ENCODE measurements at regions of chr1 and their contacts with region 1.

Region 1: DNA sequence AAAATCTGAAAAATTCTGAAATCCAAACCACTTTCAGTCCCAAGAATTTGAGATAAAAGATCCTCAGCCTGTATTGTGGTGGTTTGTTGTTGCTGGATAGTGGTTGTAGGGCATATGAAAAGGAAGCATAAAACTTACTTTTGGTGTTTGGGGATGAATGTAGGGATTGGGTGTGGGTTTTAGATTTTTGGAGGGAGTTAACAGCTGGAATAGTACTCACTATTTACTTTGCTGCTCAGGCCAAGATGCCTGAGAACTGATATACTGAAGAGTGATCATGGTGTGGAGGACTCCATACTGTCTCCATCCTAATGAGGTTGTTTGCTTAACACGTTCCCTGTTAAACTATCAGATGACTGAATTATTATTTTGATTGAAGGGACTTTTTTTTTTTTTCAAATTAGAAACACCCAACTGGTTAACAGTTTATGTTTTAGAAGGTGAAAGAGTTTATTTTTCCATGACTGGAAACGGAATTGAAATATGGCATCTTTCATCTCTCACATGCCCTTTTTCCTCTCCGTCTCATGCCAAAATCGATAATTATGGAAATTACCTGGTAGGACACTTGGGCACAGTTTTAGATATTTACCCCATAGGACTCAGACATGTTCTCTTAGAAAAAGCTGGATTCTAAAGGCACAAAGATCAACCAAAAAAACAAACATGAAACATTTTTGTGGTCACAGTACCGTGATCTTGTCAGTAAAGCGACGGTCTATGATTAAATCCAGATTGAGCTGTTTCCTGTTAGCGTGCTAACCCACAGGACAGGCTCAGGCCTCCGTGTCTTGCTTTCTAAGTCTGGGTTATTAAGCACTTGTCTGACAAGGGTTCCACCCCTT is 37.3 kb downstream of the RGL1 start:
- DNase-seq: peak; percentile 58
- H3K4me3 Mint-ChIP-seq: peak overlapping the region; percentile 56
- H3K27ac Mint-ChIP-seq: peak overlapping the region; percentile 88
- H3K4me1 Mint-ChIP-seq: peaks cover 28% of the 10 kb centered on the region
- H3K27me3 Mint-ChIP-seq: no peaks in the 10 kb centered on the region

Region 2: DNA sequence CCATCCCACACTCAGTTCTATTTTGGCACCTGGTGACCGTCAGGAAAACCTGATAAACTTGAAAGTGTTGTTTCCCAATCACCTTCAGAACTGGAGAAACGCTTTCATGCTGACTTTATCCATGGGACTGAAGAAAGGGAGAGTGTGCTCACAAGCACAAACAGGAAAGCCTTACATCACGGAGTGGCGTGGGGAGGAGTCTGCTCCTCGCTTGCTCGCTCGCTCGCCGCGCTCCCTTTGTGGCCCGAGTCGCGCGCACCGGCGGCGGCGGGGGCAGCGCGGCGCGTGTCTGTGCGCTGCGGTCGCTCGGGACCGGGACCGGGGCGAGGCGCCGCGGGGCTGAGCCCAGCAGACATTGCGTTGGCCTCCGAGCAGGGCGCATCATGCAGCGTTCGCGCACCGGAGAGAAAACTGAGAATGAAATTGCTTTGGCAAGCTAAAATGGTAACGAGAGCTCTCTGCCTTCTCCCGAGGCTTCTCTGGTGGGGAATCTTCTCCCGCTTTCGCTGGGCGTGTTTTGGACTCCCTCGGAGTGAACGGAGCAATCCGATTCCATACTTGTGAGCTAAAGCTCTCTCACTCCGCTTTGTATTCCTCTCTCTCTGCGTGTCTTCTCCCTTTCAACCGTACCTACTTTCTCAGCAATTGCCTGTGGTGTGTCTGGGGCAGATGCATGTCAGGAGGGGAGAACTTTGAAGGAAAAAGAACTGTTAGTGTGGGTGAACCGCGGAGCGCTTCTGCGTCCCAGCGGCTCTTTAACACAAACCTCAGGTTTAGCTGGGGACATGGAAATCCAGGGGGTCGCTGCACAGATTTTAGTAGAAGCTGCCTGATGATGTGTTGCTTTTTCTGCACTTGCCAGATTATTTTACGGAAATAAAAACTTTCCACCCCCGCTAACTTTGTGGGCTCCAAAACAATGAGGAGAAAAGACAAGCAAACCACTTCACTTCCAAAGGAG is 37.0 kb before region 1 on chr1 and contains the start of gene RGL1:
- CTCF ChIA-PET with region 1: no interaction called
- intact Hi-C with region 1: loop called (anchors 2 kb)
- DNase-seq: peak; percentile 39
- H3K4me3 Mint-ChIP-seq: peak within 1 kb of the TSS; percentile 83
- H3K27ac Mint-ChIP-seq: no peak within 1 kb of the TSS
- H3K4me1 Mint-ChIP-seq: peaks cover 11% of the 10 kb centered on the region
- H3K27me3 Mint-ChIP-seq: peaks cover 21% of the 10 kb centered on the region
- total RNA-seq, gene RGL1: 2.6 to 2.7 TPM

Region 3: GRCh38 chr1:183859831-183860230 is 17.7 kb after region 1 on chr1:
- CTCF ChIA-PET with region 1: no interaction called
- intact Hi-C with region 1: no loop called
- DNase-seq: no peak
- H3K4me3 Mint-ChIP-seq: no peak overlapping the region
- H3K27ac Mint-ChIP-seq: no peak overlapping the region
- H3K4me1 Mint-ChIP-seq: no peaks in the 10 kb centered on the region
- H3K27me3 Mint-ChIP-seq: no peaks in the 10 kb centered on the region

Region 4: GRCh38 chr1:183880531-183881243 is 38.5 kb after region 1 on chr1:
- CTCF ChIA-PET with region 1: no interaction called
- intact Hi-C with region 1: no loop called
- DNase-seq: no peak
- H3K4me3 Mint-ChIP-seq: no peak overlapping the region
- H3K27ac Mint-ChIP-seq: no peak overlapping the region
- H3K4me1 Mint-ChIP-seq: no peaks in the 10 kb centered on the region
- H3K27me3 Mint-ChIP-seq: no peaks in the 10 kb centered on the region

Region 5: DNA sequence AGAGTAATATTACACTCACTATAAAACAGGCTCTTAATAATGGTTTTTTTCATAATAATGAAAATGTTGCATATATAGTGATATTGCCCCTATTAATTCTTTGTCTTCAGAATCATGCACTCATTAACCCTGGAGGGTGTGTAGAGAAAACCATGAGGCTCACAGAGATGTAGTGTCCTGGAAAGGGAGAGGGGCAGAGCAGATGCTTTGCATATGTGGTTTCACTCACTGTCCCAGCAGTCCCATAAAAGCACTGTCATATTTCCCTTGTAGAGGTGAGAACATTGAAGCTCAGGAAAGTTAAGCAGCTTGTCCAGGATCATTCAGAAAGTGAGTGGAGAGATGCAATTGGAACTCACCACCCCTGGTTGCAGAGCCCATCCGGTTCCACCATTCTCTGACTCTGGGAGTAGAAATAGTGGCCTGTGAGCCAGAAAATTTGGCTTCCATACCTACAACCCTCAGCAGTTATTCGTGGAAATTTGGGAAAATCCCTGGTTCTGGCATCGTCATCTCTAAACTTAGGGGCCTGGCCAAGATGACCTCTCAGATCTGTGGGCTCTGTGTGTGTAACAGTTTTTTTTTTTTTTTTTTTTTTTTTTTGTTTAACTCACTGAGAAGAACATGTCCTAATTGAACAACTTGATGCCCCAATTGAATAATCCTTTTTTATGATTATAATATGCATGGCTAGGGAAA is 49.1 kb after region 1 on chr1:
- CTCF ChIA-PET with region 1: no interaction called
- intact Hi-C with region 1: loop called (anchors 1 kb)
- DNase-seq: no peak
- H3K4me3 Mint-ChIP-seq: no peak overlapping the region
- H3K27ac Mint-ChIP-seq: no peak overlapping the region
- H3K4me1 Mint-ChIP-seq: peaks cover 31% of the 10 kb centered on the region
- H3K27me3 Mint-ChIP-seq: no peaks in the 10 kb centered on the region

Region 6: DNA sequence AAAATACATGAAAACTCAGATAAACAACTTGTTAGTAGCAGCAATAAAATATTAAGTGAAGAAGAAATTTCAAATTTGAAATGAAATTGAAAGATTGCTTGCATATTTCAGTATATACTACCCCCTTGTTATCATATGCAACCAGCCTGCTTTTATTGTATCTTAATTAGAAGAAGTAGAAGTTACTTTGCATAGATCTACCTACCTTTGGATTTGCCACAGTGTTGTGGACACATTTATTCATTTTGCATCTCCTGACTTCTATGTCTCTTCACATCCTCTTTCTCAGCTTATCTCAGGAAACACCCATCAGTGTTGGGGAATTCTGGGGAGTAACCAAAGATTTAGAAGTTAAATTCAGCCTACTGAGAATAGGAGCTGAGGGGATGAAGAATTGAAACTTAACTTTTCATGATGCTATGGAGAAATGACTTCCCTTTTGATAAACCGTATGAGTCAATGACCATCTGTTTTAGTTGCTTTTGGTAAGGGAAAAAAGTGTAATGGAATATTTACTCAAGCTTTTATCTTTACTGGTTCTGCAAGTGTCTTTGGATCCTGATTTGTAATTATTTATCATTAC is 59.7 kb after region 1 on chr1:
- CTCF ChIA-PET with region 1: no interaction called
- intact Hi-C with region 1: loop called (anchors 1 kb)
- DNase-seq: no peak
- H3K4me3 Mint-ChIP-seq: no peak overlapping the region
- H3K27ac Mint-ChIP-seq: peak overlapping the region; percentile 33
- H3K4me1 Mint-ChIP-seq: peaks cover 20% of the 10 kb centered on the region
- H3K27me3 Mint-ChIP-seq: no peaks in the 10 kb centered on the region

Region 7: DNA sequence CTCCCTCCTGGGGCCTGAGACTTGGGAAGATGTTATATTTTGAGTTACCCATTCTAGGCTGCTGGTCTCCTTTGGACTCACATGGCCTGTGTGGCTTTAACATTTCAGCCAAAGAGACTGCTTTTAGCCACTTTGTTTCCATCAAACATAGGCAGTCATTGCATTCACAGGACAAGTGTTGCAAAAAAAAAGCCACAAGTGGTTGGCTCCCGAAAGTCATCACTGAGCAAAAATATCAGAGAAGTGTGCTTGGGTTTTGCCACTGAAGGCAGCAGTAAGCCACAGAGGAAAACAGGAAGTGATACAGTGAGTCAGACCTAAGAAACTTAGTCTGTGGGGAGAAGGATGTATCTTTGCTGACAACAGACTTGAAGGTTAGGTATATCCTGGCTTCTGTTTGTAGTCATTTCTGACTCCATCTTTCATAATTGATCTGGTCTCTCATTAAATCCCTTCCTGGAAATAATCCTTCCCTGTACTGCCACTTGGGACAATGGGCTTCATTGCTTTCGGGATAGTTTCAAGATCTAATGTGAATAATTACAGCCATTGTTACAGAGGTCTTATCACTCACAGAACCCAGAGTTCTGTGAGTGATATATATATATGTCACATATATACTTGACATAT is 114.5 kb after region 1 on chr1:
- CTCF ChIA-PET with region 1: no interaction called
- intact Hi-C with region 1: loop called (anchors 1 kb)
- DNase-seq: peak; percentile 71
- H3K4me3 Mint-ChIP-seq: no peak overlapping the region
- H3K27ac Mint-ChIP-seq: peak overlapping the region; percentile 86
- H3K4me1 Mint-ChIP-seq: no peaks in the 10 kb centered on the region
- H3K27me3 Mint-ChIP-seq: no peaks in the 10 kb centered on the region

Region 8: DNA sequence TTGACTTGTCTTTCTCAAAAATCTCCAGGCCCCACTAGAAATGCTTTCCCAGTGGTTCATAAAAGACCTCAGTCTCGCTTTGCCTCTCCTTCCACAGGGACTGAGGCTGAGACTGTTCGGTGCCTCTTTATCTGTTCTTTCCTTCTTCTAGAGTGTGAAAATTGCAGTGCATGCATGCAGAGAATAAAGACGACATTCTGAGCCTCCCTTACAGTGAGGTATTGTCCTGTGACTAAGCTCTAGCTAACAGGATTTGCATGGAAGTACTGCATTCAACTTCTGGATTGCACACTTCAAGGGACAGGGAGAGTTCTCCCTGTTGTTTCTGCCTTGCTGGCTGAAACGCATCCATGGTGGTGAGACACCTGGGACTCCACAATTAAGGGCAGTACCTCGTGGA is 126.2 kb after region 1 on chr1:
- CTCF ChIA-PET with region 1: no interaction called
- intact Hi-C with region 1: no loop called
- DNase-seq: no peak
- H3K4me3 Mint-ChIP-seq: no peak overlapping the region
- H3K27ac Mint-ChIP-seq: no peak overlapping the region
- H3K4me1 Mint-ChIP-seq: no peaks in the 10 kb centered on the region
- H3K27me3 Mint-ChIP-seq: no peaks in the 10 kb centered on the region

Region 9: DNA sequence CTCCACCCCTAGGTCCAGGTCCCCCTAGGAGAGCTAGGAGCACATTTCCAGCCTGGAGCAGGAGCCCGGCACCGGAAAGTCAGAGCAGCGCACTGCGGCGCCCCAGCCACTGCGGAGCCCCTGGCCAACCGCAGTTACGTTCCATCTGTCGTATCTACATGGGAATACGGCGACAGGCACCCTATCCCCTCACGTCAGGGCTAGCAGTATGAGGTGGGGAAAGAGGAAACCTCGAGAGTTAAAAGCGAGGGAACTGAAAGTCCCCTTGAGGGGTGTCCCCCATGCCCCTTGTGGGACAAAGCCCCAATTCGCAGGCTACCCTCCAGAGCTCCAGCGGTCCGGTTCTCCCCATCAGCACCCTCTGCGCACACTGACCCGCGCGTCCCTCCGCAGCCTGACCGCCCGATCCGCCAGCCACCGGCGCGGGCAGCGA is 194.4 kb after region 1 on chr1:
- CTCF ChIA-PET with region 1: no interaction called
- intact Hi-C with region 1: loop called (anchors 2 kb)
- DNase-seq: peak; percentile 23
- H3K4me3 Mint-ChIP-seq: peak overlapping the region; percentile 58
- H3K27ac Mint-ChIP-seq: no peak overlapping the region
- H3K4me1 Mint-ChIP-seq: peaks cover 15% of the 10 kb centered on the region
- H3K27me3 Mint-ChIP-seq: peaks cover 68% of the 10 kb centered on the region

Region 10: DNA sequence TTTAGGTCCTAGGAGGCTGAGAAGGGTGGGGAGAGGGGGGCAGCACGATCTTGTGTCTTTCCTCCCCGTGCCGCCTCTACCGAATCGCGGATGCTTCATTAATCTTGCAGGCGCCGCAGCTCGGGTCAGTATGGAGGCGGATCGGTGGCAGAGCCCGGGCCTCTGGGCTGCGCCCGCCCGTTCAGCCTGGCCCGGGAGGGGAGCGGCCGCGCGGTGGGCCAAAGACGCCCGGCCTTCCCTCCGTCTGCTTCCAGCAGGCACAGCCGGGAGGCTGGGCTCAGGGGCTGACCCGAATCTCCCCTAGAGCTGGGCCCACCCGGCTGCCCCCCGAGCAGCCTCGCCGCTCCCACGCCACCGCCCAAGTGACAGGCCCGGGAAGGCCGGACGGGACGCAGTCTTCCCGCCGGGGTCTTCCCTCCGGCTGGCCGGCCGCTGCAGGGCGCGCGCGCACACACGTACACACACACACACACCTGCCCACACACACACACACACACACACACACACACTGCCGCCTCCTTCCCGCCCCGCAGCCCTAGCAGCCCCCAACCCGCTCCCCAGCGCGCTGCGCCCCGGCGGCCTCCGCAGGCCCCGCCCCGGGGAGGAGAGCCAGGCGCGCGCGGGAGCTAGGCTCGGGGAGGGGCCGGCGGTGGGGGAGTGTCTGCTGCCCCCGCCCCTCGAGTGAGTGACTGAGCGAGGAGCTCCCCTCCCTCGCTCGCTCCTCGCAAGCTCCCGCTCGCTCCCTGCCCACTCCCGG is 544.3 kb after region 1 on chr1 and contains the start of gene C1orf21:
- CTCF ChIA-PET with region 1: no interaction called
- intact Hi-C with region 1: loop called (anchors 1 kb)
- DNase-seq: peak; percentile 80
- H3K4me3 Mint-ChIP-seq: peak within 1 kb of the TSS; percentile 78
- H3K27ac Mint-ChIP-seq: no peak within 1 kb of the TSS
- H3K4me1 Mint-ChIP-seq: peaks cover 14% of the 10 kb centered on the region
- H3K27me3 Mint-ChIP-seq: peaks cover 59% of the 10 kb centered on the region
- total RNA-seq, gene C1orf21: 1.2 to 1.4 TPM

Measured in activated naive CD4-positive, alpha-beta T cell treated with anti-CD3 and anti-CD28 coated beads for 36 hours (primary cell).